ENCODE measurements at regions of chr19 and their contacts with region 1.

Region 1: GRCh38 chr19:10717356-10718204 is at the start of gene DNM2:
- DNase-seq: peak; percentile 100
- ATAC-seq: peak; percentile 84
- H3K4me3 ChIP-seq: peak within 1 kb of the TSS; percentile 75 to 96 (median 84)
- H3K4me3 Mint-ChIP-seq: peak within 1 kb of the TSS; percentile 95
- H3K27ac ChIP-seq: peak within 1 kb of the TSS; percentile 47 to 89
- H3K27ac Mint-ChIP-seq: peak within 1 kb of the TSS; percentile 92
- H3K4me1 ChIP-seq: peaks cover 18 to 49% of the 10 kb centered on the region in 2 donors
- H3K4me1 Mint-ChIP-seq: peaks cover 50% of the 10 kb centered on the region
- H3K27me3 ChIP-seq: no peaks in the 10 kb centered on the region
- H3K27me3 Mint-ChIP-seq: no peaks in the 10 kb centered on the region
- CTCF ChIP-seq: peak; percentile 77
- total RNA-seq, gene DNM2: 353 and 393 TPM in 2 replicates

Region 2: DNA sequence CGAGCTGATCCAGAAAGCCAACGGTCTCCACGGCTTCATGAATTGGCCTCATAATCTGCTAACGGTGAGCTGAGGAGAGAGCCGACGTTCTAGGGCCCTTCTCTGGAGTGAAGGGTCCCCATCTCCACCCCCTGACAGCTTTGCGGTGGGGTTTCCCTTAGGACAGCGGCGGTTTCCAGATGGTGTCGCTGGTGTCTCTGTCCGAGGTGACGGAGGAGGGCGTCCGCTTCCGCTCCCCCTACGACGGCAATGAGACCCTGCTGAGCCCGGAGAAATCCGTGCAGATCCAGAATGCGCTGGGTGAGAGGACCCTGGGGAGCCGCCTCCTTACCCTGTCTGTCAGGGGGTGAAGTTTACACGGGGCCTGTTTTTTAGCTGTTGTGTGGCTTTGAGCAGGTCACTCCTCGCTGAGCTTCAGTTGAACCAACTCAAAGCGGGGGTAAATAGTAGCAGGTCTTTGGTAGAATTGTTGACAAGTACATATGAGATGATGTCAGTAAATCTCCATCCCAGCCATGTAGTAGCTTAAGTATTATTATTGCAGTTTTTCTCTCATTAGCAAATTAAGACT is 15.5 kb before region 1 on chr19:
- CTCF ChIA-PET with region 1: interaction called, 25 read pairs
- POLR2A ChIA-PET with region 1: interaction called, 10 read pairs
- intact Hi-C with region 1: loop called (anchors 2 kb)
- DNase-seq: peak; percentile 53
- ATAC-seq: peak; percentile 34
- H3K4me3 ChIP-seq: peak overlapping the region; percentile 51 to 96 (median 88)
- H3K4me3 Mint-ChIP-seq: peak overlapping the region; percentile 98
- H3K27ac ChIP-seq: peak overlapping the region in 1 of 2 donors; percentile 66
- H3K27ac Mint-ChIP-seq: peak overlapping the region; percentile 93
- H3K4me1 ChIP-seq: peaks cover 5 to 14% of the 10 kb centered on the region in 2 donors
- H3K4me1 Mint-ChIP-seq: peaks cover 12% of the 10 kb centered on the region
- H3K27me3 ChIP-seq: no peaks in the 10 kb centered on the region
- H3K27me3 Mint-ChIP-seq: no peaks in the 10 kb centered on the region
- CTCF ChIP-seq: no peak

Region 3: DNA sequence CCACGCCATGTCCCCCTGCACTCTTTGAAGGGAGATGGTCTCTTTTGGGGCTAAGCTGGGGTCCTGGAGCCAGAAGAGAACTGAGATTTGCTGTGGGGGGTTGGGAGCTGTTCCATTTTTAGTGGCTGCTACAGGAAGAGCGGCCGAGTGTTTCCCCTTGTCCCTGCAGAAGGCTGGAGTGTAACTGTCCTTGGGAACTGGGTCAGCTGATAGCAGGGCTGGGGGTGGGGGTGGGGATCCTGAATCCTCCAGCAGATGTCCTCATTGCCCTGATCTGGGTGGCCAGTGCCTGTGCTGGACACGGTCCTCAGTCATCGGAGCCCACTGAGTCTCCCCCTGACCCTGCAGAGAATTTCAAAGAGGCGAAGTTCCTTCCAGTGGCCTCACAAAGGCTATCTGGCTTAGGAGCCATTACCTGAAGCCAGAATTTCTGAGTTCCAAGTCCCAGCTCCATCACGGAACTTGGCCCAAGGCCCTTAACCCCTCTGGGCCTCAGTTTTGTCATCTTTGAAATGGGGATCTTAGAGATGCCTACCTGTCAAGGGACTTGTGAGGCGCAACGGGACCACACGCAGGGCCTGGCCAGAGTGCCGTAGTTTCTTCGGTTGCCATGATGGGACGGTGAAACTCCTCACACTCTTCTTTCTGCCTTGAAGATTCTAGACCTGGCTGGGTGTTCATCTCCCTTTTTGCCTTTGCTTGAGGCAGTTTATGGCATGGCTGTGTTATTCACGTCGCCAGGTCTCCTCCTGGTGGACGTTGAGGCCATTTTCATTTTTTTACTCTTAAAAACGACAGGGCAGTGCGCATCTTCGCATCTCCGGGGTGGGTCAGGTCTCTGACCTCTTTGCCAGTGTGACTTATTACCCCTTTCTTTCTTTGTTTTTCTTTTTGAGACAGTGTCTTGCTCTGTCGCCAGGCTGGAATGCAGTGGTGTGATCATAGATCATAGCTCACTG is 52.2 kb after region 1 on chr19:
- CTCF ChIA-PET with region 1: interaction called, 33 read pairs
- POLR2A ChIA-PET with region 1: interaction called, 3 read pairs
- intact Hi-C with region 1: no loop called
- DNase-seq: peak; percentile 43
- ATAC-seq: no peak
- H3K4me3 ChIP-seq: no peak overlapping the region
- H3K4me3 Mint-ChIP-seq: no peak overlapping the region
- H3K27ac ChIP-seq: peak overlapping the region in 1 of 2 donors; percentile 66
- H3K27ac Mint-ChIP-seq: peak overlapping the region; percentile 88
- H3K4me1 ChIP-seq: peaks cover 14 to 36% of the 10 kb centered on the region in 2 donors
- H3K4me1 Mint-ChIP-seq: peaks cover 46% of the 10 kb centered on the region
- H3K27me3 ChIP-seq: no peaks in the 10 kb centered on the region
- H3K27me3 Mint-ChIP-seq: no peaks in the 10 kb centered on the region
- CTCF ChIP-seq: peak; percentile 14

Region 4: GRCh38 chr19:10820173-10820572 is 102.6 kb after region 1 on chr19:
- CTCF ChIA-PET with region 1: interaction called, 31 read pairs
- POLR2A ChIA-PET with region 1: interaction called, 5 read pairs
- intact Hi-C with region 1: loop called (anchors 1 kb)
- DNase-seq: no peak
- ATAC-seq: no peak
- H3K4me3 ChIP-seq: no peak overlapping the region
- H3K4me3 Mint-ChIP-seq: no peak overlapping the region
- H3K27ac ChIP-seq: no peak overlapping the region
- H3K27ac Mint-ChIP-seq: peak overlapping the region; percentile 43
- H3K4me1 ChIP-seq: no peaks in the 10 kb centered on the region
- H3K4me1 Mint-ChIP-seq: no peaks in the 10 kb centered on the region
- H3K27me3 ChIP-seq: no peaks in the 10 kb centered on the region
- H3K27me3 Mint-ChIP-seq: no peaks in the 10 kb centered on the region
- CTCF ChIP-seq: no peak

Region 5: DNA sequence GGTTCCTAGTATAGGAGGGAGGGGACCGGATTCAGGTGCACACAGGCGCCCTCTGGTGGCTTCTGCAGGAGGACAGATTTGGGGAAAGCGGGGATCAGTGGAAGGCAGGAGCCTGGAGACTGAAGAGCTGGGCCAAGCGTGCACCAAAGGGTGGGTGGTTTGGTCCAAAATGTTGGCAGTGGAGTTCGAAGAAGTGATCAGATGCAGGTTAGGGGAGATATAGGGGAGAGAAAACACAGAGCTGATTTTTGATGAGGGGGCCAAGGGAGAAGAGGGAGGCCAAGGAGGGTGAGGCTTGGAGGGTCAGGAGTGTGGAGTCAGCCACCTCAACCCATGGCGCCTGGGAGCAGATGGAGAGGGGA is 146.9 kb after region 1 on chr19:
- CTCF ChIA-PET with region 1: interaction called, 58 read pairs
- POLR2A ChIA-PET with region 1: interaction called, 5 read pairs
- intact Hi-C with region 1: loop called (anchors 1 kb)
- DNase-seq: peak; percentile 81
- ATAC-seq: peak; percentile 69
- H3K4me3 ChIP-seq: no peak overlapping the region
- H3K4me3 Mint-ChIP-seq: no peak overlapping the region
- H3K27ac ChIP-seq: no peak overlapping the region
- H3K27ac Mint-ChIP-seq: peak overlapping the region; percentile 38
- H3K4me1 ChIP-seq: peaks cover 21 to 31% of the 10 kb centered on the region in 2 donors
- H3K4me1 Mint-ChIP-seq: peaks cover 34% of the 10 kb centered on the region
- H3K27me3 ChIP-seq: no peaks in the 10 kb centered on the region
- H3K27me3 Mint-ChIP-seq: no peaks in the 10 kb centered on the region
- CTCF ChIP-seq: peak; percentile 83

Region 6: GRCh38 chr19:10986261-10987127 is 268.9 kb after region 1 on chr19:
- CTCF ChIA-PET with region 1: no interaction called
- POLR2A ChIA-PET with region 1: no interaction called
- intact Hi-C with region 1: no loop called
- DNase-seq: no peak
- ATAC-seq: no peak
- H3K4me3 ChIP-seq: no peak overlapping the region
- H3K4me3 Mint-ChIP-seq: no peak overlapping the region
- H3K27ac ChIP-seq: no peak overlapping the region
- H3K27ac Mint-ChIP-seq: no peak overlapping the region
- H3K4me1 ChIP-seq: no peaks in the 10 kb centered on the region
- H3K4me1 Mint-ChIP-seq: no peaks in the 10 kb centered on the region
- H3K27me3 ChIP-seq: no peaks in the 10 kb centered on the region
- H3K27me3 Mint-ChIP-seq: no peaks in the 10 kb centered on the region
- CTCF ChIP-seq: no peak

Measured in B cell (primary cell).